ENCODE measurements at regions of chr12 and their contacts with region 1.

Region 1: GRCh38 chr12:120971299-120972179 is 6.8 kb upstream of the HNF1A start:
- DNase-seq: peak; percentile 58
- H3K4me3 ChIP-seq: no peak overlapping the region
- H3K27ac ChIP-seq: no peak overlapping the region
- H3K4me1 ChIP-seq: no peaks in the 10 kb centered on the region
- H3K27me3 ChIP-seq: no peaks in the 10 kb centered on the region
- CTCF ChIP-seq: peak; percentile 54 to 58
- POLR2A ChIP-seq: no peak

Region 2: GRCh38 chr12:120428597-120429229 is 542.8 kb before region 1 on chr12:
- CTCF ChIA-PET with region 1: no interaction called
- POLR2A ChIA-PET with region 1: no interaction called
- dilution Hi-C with region 1: no loop called
- intact Hi-C with region 1: no loop called
- DNase-seq: no peak
- H3K4me3 ChIP-seq: no peak overlapping the region
- H3K27ac ChIP-seq: no peak overlapping the region
- H3K4me1 ChIP-seq: no peaks in the 10 kb centered on the region
- H3K27me3 ChIP-seq: peaks cover 0 to 3% of the 10 kb centered on the region in 2 experiments
- CTCF ChIP-seq: no peak
- POLR2A ChIP-seq: no peak

Region 3: DNA sequence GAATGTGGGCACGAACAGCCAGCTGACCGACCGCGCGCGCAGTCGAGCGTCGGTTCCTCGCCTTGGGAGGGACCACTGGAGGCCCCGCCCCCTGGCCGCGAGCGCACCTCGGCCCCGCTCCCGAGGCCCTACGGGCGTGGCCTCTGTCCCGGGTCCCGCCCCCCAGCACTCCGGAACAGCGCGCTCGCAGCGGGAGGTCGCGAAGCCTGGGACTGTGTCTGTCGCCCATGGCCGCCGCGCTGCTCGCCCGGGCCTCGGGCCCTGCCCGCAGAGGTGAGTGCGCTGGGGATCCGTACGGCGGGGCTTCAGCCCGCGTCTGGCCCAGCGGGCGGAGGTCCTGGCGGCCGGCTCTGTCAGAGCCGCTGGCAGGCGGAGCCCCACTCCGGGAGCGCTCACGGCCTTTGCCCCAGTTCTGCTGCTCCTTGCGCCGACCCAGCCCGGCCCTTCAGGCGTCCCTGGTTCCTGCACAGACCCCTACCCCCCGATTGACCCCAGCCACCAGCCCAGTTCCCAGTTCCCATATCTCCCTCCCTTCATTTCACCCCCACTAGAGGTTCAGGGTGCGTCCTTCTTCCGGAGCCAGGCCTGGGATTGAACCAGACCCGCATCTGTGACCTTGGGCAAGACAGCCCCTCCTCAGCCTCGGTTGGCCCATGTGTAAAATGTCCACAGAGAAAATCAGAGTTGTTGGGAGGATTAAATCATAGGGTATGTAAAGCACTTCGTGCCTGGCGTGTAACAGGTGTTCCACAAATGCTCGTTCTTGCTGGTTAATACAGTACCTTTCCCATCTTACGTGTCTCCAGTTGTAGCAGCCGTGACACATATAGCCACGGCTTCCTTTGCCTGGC is 245.7 kb before region 1 on chr12 and contains the start of gene ACADS:
- CTCF ChIA-PET with region 1: interaction called, 8 read pairs
- POLR2A ChIA-PET with region 1: no interaction called
- dilution Hi-C with region 1: no loop called
- intact Hi-C with region 1: loop called (anchors 5 kb)
- DNase-seq: peak; percentile 82
- H3K4me3 ChIP-seq: peak within 1 kb of the TSS; percentile 43 to 63 (median 56)
- H3K27ac ChIP-seq: peak within 1 kb of the TSS; percentile 21
- H3K4me1 ChIP-seq: peaks cover 10% of the 10 kb centered on the region
- H3K27me3 ChIP-seq: no peaks in the 10 kb centered on the region
- CTCF ChIP-seq: no peak
- POLR2A ChIP-seq: peak; percentile 47
- total RNA-seq, gene ACADS: 8.2 and 9.5 TPM in 2 replicates

Region 4: DNA sequence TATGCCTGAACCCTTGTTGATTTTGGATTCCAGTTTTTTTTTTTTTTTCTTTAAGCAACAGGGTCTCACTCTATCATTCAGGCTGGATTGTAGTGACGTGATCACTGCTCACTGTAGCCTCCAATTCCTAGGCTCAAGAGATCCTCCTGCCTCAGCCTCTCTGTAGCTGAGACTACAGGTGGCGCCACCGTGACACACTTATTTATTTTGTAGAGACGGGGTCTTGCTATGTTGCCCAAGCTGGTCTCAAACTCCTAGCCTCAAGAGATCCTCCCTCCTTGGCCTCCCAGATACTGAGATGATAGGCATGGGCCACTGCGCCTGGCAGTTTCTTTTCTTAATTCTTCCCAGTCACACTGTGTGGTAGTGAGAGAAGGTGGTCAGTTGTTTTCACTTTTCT is 220.7 kb before region 1 on chr12:
- CTCF ChIA-PET with region 1: interaction called, 16 read pairs
- POLR2A ChIA-PET with region 1: no interaction called
- dilution Hi-C with region 1: no loop called
- intact Hi-C with region 1: no loop called
- DNase-seq: no peak
- H3K4me3 ChIP-seq: no peak overlapping the region
- H3K27ac ChIP-seq: no peak overlapping the region
- H3K4me1 ChIP-seq: no peaks in the 10 kb centered on the region
- H3K27me3 ChIP-seq: no peaks in the 10 kb centered on the region
- CTCF ChIP-seq: no peak
- POLR2A ChIP-seq: no peak

Region 5: GRCh38 chr12:120939523-120939922 is 32.0 kb before region 1 on chr12:
- CTCF ChIA-PET with region 1: interaction called, 23 read pairs
- POLR2A ChIA-PET with region 1: no interaction called
- dilution Hi-C with region 1: no loop called
- intact Hi-C with region 1: no loop called
- DNase-seq: no peak
- H3K4me3 ChIP-seq: no peak overlapping the region
- H3K27ac ChIP-seq: no peak overlapping the region
- H3K4me1 ChIP-seq: no peaks in the 10 kb centered on the region
- H3K27me3 ChIP-seq: peaks cover 0 to 7% of the 10 kb centered on the region in 2 experiments
- CTCF ChIP-seq: no peak
- POLR2A ChIP-seq: no peak

Region 6: DNA sequence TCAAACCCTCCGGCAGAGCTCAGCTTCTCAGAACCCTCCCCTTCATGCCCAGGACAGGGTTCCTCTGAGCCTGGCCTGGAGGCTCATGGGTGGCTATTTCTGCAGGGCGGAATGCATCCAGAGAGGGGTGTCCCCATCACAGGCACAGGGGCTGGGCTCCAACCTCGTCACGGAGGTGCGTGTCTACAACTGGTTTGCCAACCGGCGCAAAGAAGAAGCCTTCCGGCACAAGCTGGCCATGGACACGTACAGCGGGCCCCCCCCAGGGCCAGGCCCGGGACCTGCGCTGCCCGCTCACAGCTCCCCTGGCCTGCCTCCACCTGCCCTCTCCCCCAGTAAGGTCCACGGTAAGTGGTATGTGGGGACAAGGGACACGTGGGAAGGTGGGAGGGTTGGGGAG is 22.5 kb after region 1 on chr12:
- CTCF ChIA-PET with region 1: interaction called, 12 read pairs
- POLR2A ChIA-PET with region 1: no interaction called
- dilution Hi-C with region 1: no loop called
- intact Hi-C with region 1: no loop called
- DNase-seq: no peak
- H3K4me3 ChIP-seq: no peak overlapping the region
- H3K27ac ChIP-seq: no peak overlapping the region
- H3K4me1 ChIP-seq: no peaks in the 10 kb centered on the region
- H3K27me3 ChIP-seq: peaks cover 3 to 8% of the 10 kb centered on the region in 2 experiments
- CTCF ChIP-seq: no peak
- POLR2A ChIP-seq: no peak

Region 7: DNA sequence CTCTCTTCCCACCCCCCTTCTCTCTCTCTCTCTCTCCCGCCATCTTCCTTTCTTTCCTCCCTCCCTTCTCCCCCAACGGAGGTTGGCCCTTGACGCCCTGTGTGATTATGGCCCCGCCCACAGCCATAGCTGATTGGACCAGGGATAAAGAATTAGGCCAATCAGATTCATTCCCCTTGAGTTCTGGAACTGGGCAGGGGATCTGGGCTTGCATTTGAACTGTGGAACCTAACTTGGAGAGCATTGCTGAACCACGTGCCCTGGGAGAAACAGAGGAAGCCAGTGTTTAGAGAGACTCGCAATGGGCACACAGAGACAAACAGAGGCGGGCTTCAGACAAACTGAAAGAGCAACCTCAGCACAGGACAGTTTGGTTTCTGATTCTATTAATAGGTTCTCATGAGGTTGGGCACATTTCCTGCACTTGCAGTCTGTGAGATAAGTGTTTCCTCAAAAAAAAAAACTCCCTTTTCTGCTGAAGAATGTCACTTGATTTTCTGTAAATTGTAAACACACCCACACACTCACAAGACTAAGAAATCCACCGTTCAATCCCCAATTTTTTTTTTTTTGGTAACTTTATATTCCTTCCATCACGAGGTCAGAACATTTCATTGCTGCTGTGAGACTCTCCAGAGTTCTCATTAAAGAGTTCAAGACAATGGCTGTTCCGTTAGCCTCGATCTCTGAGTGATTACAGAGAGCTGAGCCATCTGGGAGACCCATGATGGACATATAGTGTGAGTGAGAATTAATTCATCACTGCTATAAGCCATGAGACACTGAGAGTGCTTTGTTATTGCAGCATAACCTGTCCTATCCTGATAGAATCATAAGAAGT is 157.7 kb after region 1 on chr12:
- CTCF ChIA-PET with region 1: no interaction called
- POLR2A ChIA-PET with region 1: no interaction called
- dilution Hi-C with region 1: no loop called
- intact Hi-C with region 1: no loop called
- DNase-seq: peak; percentile 79
- H3K4me3 ChIP-seq: peak overlapping the region in 1 of 3 experiments; percentile 18
- H3K27ac ChIP-seq: peak overlapping the region; percentile 18
- H3K4me1 ChIP-seq: peaks cover 25% of the 10 kb centered on the region
- H3K27me3 ChIP-seq: no peaks in the 10 kb centered on the region
- CTCF ChIP-seq: no peak
- POLR2A ChIP-seq: no peak

Measured in endothelial cell of umbilical vein (primary cell).